Activated naive CD8-positive, alpha-beta T cell treated with anti-CD3 and anti-CD28 coated beads, Interleukin-2, amount 10 ng/mL, durations not matched to agents 7 days and 5 days (primary cell): ENCODE measurements at regions of chr1 and their contacts with region 1.

Region 1: DNA sequence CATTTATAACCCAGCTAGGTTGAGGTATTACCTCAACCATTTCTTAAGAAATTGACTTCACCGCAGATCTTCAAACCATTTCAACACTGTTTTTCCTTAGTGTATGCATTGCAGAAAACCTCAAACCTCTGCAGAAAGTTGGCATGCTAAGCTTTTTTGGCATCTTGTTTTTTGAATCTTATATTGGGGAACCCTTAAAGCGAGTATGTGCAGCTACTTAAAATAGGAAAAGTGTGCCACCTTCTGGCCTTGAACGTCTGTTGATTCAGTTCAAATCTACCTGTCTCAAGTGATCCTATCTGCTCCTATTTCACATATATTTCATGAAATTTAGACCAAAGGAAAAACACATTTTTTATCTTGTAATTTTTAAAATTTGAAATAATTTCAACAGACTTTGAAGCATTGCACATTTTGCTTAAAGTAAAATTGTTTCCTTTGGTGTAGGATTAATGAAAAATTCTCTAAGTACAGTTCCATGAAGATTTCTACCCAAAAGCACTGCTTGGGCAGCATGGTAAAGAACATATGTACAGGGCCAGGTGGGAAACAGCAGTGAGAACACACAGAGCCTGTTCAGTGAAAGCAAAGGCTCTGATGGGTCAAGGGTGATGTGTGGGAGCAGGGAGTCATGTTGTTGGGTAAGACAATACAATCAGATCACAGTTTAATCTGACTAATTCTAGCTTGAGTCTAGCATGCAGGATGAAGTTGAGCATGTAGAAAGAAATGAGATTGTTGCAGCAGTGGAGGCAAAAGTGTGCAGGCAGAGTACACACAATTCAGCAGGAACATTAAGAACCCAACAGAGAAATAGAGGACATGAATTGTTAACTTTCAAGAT is 17.2 kb downstream of the HENMT1 start:
- DNase-seq: no peak
- ATAC-seq: no peak
- H3K4me3 Mint-ChIP-seq: peak overlapping the region; percentile 20
- H3K27ac Mint-ChIP-seq: peak overlapping the region; percentile 97
- H3K4me1 Mint-ChIP-seq: peaks cover 65% of the 10 kb centered on the region
- H3K27me3 Mint-ChIP-seq: no peaks in the 10 kb centered on the region

Region 2: GRCh38 chr1:108661030-108661620 is 17.4 kb after region 1 on chr1 and contains the start of gene HENMT1:
- POLR2A ChIA-PET with region 1: interaction called, 200 read pairs
- DNase-seq: peak; percentile 87
- ATAC-seq: peak; percentile 82
- H3K4me3 Mint-ChIP-seq: peak within 1 kb of the TSS; percentile 86
- H3K27ac Mint-ChIP-seq: peak within 1 kb of the TSS; percentile 96
- H3K4me1 Mint-ChIP-seq: peaks cover 31% of the 10 kb centered on the region
- H3K27me3 Mint-ChIP-seq: no peaks in the 10 kb centered on the region
- total RNA-seq, gene HENMT1: 32.3 to 33.0 TPM

Region 3: DNA sequence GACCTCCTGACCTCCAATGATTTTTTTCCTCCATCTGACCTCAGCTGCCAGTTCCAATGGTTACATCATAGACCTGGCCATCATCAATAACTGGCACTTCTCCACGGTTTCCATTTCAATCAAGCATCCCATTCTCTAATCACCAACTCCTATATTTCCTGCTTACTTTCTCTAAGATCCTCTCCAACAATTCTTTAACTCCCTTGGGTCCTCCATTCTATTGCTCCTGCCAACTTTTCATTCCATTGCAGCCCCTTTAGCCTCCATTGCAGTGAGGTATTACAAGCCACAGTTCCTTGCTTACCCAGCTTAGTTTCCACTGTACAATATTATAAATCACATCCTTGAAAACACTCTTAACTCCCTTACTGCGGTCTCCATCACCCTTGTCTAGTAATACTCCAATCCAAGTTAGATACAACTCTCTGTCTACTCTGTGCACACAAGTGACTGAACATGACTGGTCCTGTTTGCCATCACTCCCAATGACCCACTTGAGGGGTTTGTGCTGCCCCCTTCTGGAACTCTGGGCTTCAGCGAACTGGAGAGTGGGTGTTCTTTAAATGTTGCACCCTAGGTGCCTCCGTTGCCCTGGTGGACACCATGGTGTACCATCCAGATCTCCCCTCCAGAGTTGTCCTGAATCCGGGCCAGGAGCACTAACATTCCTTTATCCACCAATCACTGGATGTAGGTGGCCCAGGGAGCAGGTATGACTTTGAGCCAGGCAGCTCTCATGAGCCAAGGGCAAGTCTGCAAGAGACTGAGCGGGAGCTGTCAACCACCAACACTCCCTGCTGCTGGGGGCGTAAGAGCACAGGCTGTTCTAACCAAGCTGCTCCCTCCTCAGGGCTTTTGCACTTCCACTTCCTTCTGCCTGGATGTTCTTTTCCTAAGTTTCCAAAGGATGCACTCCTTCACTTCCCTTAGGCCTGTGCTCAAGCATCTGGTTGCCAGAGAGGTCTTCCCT is 65.3 kb after region 1 on chr1:
- POLR2A ChIA-PET with region 1: interaction called, 11 read pairs
- DNase-seq: peak; percentile 53
- ATAC-seq: peak; percentile 92
- H3K4me3 Mint-ChIP-seq: no peak overlapping the region
- H3K27ac Mint-ChIP-seq: no peak overlapping the region
- H3K4me1 Mint-ChIP-seq: peaks cover 13% of the 10 kb centered on the region
- H3K27me3 Mint-ChIP-seq: peaks cover 15% of the 10 kb centered on the region

Region 4: GRCh38 chr1:108750476-108751181 is 106.9 kb after region 1 on chr1:
- POLR2A ChIA-PET with region 1: no interaction called
- DNase-seq: no peak
- ATAC-seq: no peak
- H3K4me3 Mint-ChIP-seq: no peak overlapping the region
- H3K27ac Mint-ChIP-seq: no peak overlapping the region
- H3K4me1 Mint-ChIP-seq: peaks cover 22% of the 10 kb centered on the region
- H3K27me3 Mint-ChIP-seq: no peaks in the 10 kb centered on the region

Region 5: GRCh38 chr1:108961198-108961597 is 317.5 kb after region 1 on chr1:
- POLR2A ChIA-PET with region 1: no interaction called
- DNase-seq: no peak
- ATAC-seq: no peak
- H3K4me3 Mint-ChIP-seq: no peak overlapping the region
- H3K27ac Mint-ChIP-seq: no peak overlapping the region
- H3K4me1 Mint-ChIP-seq: peaks cover 18% of the 10 kb centered on the region
- H3K27me3 Mint-ChIP-seq: peaks cover 7% of the 10 kb centered on the region